GM23248 (cell line): ENCODE measurements at regions of chr9 and their contacts with region 1.

Region 1: DNA sequence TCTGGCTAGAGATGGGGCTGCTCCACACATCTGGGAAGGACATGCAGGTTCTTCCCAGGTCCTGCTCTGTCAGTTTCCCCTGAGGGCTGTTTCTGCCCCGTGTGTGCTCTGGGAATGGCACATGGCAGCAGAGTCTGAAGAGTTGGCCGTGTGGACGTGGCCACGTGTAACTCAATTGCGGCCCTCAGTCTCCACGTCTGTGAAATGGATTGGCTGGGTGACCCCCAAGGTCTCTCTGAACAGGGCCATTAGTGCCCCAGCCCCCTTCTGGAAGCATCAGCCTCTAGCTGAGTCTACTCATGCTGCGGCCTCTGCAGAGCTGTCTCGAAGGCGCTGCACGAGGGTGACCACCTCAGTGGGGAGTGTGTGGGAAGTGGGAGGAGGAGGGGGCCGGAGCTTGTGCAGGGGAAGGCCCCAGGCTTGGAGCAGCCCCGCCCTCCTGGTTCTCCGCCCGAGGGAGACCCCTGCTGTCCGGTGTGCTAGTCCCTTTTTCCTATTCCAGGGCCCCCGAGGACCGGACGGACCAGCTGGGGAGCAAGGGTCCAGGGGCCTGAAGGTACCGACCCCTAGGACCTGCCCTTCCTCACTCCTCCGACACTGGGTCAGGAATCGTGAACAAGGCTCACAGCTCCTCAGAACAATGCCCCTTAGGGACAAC is 58.9 kb upstream of the ORM1 start:
- DNase-seq: no peak
- H3K4me3 ChIP-seq: no peak overlapping the region
- H3K27ac ChIP-seq: no peak overlapping the region
- H3K4me1 ChIP-seq: no peaks in the 10 kb centered on the region
- H3K27me3 ChIP-seq: no peaks in the 10 kb centered on the region

Region 2: DNA sequence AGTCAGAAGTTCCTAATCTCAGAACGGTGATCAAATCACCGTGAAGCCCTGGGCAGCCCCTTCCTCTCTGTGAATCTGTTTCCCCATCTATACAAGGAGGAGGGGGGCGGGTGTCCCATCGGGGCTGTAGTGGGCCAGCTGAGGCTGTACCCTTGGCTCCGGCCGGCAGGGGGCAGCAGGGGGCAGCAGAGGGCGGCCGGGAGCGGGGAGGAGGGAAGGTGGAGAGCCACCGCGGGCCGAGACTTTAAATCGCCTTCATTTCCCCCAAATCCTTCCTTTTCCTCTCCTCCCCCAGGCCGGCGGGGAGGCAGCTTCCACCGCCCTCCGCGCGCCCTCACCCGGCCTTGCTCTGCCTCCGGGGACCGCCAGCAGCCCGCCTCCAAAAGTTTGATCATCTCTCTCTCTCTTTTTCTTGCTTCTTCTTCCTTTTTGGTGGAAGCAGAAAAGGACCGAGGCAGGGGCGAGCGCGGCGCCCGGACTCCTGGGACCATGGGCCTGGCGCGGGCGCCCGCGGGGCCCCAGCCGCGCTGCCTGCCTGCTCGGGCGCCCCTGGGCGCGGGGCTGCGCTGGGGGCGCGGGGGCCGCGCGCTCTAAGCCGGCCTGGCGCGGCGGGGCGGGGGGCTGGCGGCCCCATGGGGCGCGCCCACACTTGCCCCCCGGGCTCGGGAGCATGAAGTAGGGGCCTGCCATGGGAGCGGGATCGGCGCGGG is 108.6 kb before region 1 on chr9 and contains the start of gene COL27A1:
- in situ Hi-C with region 1: loop called (anchors 10 kb)
- DNase-seq: peak; percentile 91
- H3K4me3 ChIP-seq: peak within 1 kb of the TSS; percentile 83
- H3K27ac ChIP-seq: peak within 1 kb of the TSS; percentile 23; the same call in 1 of the 2 replicates
- H3K4me1 ChIP-seq: peaks cover 6% of the 10 kb centered on the region; the same call in 1 of the 2 replicates
- H3K27me3 ChIP-seq: peaks cover 16% of the 10 kb centered on the region
- total RNA-seq, gene COL27A1: 2.3 and 3.9 TPM in 2 replicates

Region 3: GRCh38 chr9:114224247-114224610 is 39.8 kb before region 1 on chr9:
- in situ Hi-C with region 1: no loop called
- DNase-seq: peak; percentile 83
- H3K4me3 ChIP-seq: no peak overlapping the region
- H3K27ac ChIP-seq: peak overlapping the region; percentile 69
- H3K4me1 ChIP-seq: peaks cover 28% of the 10 kb centered on the region
- H3K27me3 ChIP-seq: no peaks in the 10 kb centered on the region